A549 (cell line): ENCODE measurements at regions of chr16 and their contacts with region 1.

Region 1: DNA sequence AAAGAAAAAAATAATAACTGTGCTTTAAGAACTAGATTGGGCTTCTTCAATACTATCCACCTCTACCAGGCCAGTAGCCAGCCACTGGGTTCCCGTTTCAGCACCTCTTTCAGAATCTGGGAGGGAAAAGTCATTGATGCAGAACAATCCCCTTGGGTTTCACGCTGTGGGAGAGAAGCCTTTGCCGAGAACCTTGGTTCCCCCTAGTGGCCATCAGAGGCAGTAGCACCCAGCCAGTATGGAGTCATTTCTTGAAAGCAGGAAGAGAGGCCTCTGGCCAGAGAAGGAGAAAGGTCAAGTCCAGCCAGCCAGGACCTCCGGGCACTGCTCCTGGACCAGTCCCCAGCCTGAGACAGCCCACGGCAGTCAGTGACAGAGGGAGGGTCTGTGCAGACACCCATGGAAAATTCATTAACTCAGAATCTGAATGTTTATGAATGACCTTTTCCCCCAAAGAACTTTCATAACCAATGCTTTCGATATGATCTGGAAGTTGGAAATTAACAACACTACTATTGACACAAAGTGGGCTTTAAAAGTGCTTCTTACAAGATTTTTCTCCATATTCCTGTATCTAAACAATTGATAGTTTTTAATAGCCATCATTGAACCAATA is 51.2 kb upstream of the CDH5 start:
- DNase-seq: peak; percentile 76 to 89
- ATAC-seq: peak; percentile 85 to 98
- H3K4me3 ChIP-seq: no peak overlapping the region
- H3K27ac ChIP-seq: no peak overlapping the region
- H3K4me1 ChIP-seq: 0 out of 3 replicates have a peak, but pooled peaks cover 2% of the 10 kb centered on the region
- CTCF ChIP-seq: peak; percentile 83
- EP300 ChIP-seq: no peak
- POLR2A ChIP-seq: no peak
- RAD21 ChIP-seq: peak; percentile 70 to 81

Region 2: DNA sequence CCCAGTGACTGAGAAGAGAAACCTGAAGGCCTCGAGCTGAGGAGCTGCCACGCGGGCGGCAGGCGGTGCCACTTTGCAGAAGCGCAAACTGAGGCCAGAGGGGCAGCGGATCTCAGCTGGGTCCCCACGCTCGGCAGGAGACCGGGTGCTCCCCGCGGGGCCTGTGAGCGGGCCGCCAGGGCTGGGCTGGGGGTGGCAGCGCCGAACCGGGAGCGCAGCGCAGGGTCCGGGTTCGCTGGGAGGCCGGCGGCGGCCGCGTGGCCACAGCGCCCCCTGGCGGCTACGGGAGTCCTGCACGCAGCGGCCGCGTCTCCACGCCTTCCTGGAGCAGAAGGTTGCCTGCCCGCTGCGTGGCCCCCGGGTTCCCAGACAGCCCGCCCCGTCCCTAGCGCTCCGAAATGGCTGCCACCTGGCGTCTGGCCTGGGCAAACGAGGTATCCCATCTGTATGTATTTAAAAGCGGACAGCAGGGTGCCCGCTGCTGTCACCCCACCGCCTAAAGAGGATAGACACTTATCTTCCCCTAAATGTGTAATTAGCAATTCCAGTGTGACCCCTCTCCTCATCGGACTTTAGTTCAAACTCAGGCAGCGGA is 44.9 kb before region 1 on chr16:
- CTCF ChIA-PET with region 1: interaction called, 21 read pairs
- POLR2A ChIA-PET with region 1: no interaction called
- DNase-seq: peak; percentile 73 to 85
- ATAC-seq: peak; percentile 80 to 94
- H3K4me3 ChIP-seq: 0 out of 3 replicates have a peak overlapping the region, but pooled peaks have one; percentile 24
- H3K27ac ChIP-seq: peak overlapping the region; percentile 37 to 69; a peak in 4 of 6 replicates
- H3K4me1 ChIP-seq: 0 out of 3 replicates have a peak, but pooled peaks cover 2% of the 10 kb centered on the region
- CTCF ChIP-seq: peak; percentile 87
- EP300 ChIP-seq: no peak
- POLR2A ChIP-seq: no peak
- RAD21 ChIP-seq: peak; percentile 72 to 88

Region 3: GRCh38 chr16:66275775-66276428 is 39.4 kb before region 1 on chr16:
- CTCF ChIA-PET with region 1: interaction called, 21 read pairs
- POLR2A ChIA-PET with region 1: no interaction called
- DNase-seq: peak; percentile 65 to 71
- ATAC-seq: peak; percentile 47 to 81; a peak in 4 of 6 replicates
- H3K4me3 ChIP-seq: no peak overlapping the region
- H3K27ac ChIP-seq: no peak overlapping the region
- H3K4me1 ChIP-seq: no peaks in the 10 kb centered on the region
- CTCF ChIP-seq: peak; percentile 46
- EP300 ChIP-seq: no peak
- POLR2A ChIP-seq: no peak
- RAD21 ChIP-seq: peak; percentile 35 to 65; a peak in 4 of 5 replicates

Region 4: GRCh38 chr16:66289051-66289680 is 26.2 kb before region 1 on chr16:
- CTCF ChIA-PET with region 1: no interaction called
- POLR2A ChIA-PET with region 1: no interaction called
- DNase-seq: no peak
- ATAC-seq: no peak
- H3K4me3 ChIP-seq: no peak overlapping the region
- H3K27ac ChIP-seq: no peak overlapping the region
- H3K4me1 ChIP-seq: no peaks in the 10 kb centered on the region
- CTCF ChIP-seq: no peak
- EP300 ChIP-seq: no peak
- POLR2A ChIP-seq: no peak
- RAD21 ChIP-seq: no peak

Region 5: GRCh38 chr16:66326991-66327513 is 11.7 kb after region 1 on chr16:
- CTCF ChIA-PET with region 1: interaction called, 16 read pairs
- POLR2A ChIA-PET with region 1: no interaction called
- DNase-seq: no peak
- ATAC-seq: no peak
- H3K4me3 ChIP-seq: no peak overlapping the region
- H3K27ac ChIP-seq: no peak overlapping the region
- H3K4me1 ChIP-seq: no peaks in the 10 kb centered on the region
- CTCF ChIP-seq: no peak
- EP300 ChIP-seq: no peak
- POLR2A ChIP-seq: no peak
- RAD21 ChIP-seq: no peak

Region 6: DNA sequence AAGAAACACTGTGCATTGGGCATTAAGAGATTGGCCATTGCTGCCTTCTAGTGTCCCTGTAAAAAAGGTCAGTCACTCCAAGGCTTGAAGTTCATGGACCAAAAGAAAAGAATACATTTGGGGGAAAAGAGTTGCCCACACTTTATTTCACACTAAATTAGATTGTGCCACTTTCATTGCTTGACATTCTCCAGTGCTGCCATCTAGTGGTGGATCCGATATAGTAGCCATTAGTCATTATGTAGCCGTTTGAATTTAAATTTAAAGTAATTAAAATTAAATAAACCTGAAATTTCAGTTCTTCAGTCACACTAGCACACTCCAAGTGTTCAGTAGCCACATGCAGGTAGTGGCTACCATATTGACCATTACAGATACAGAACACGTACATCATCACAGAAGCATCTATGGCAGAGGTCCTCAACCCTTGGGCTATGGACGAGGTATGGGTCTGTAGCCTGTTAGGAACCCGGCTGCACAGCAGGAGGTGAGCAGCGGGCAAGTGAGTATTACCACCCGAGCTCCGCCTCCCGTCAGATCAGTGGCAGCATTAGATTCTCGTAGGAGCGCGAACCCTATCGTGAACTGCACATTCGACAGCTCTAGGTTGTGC is 29.3 kb after region 1 on chr16:
- CTCF ChIA-PET with region 1: interaction called, 24 read pairs
- POLR2A ChIA-PET with region 1: no interaction called
- DNase-seq: peak in 1 of 2 experiments; percentile 31
- ATAC-seq: peak in 1 of 2 experiments; percentile 53; a peak in 3 of 6 replicates
- H3K4me3 ChIP-seq: no peak overlapping the region
- H3K27ac ChIP-seq: no peak overlapping the region
- H3K4me1 ChIP-seq: no peaks in the 10 kb centered on the region
- CTCF ChIP-seq: peak; percentile 82
- EP300 ChIP-seq: no peak
- POLR2A ChIP-seq: no peak
- RAD21 ChIP-seq: peak; percentile 16 to 40; a peak in 2 of 5 replicates

Region 7: GRCh38 chr16:66462912-66463311 is 147.6 kb after region 1 on chr16:
- CTCF ChIA-PET with region 1: no interaction called
- POLR2A ChIA-PET with region 1: no interaction called
- DNase-seq: no peak
- ATAC-seq: no peak
- H3K4me3 ChIP-seq: no peak overlapping the region
- H3K27ac ChIP-seq: no peak overlapping the region
- H3K4me1 ChIP-seq: no peaks in the 10 kb centered on the region
- CTCF ChIP-seq: no peak
- EP300 ChIP-seq: no peak
- POLR2A ChIP-seq: no peak
- RAD21 ChIP-seq: no peak